BJ (cell line): ENCODE measurements at regions of chr2 and their contacts with region 1.

Region 1: GRCh38 chr2:189698020-189698887 is 23.8 kb downstream of the ANKAR start:
- DNase-seq: peak; percentile 16
- H3K4me3 ChIP-seq: no peak overlapping the region
- H3K27me3 ChIP-seq: no peaks in the 10 kb centered on the region
- CTCF ChIP-seq: peak; percentile 52

Region 2: DNA sequence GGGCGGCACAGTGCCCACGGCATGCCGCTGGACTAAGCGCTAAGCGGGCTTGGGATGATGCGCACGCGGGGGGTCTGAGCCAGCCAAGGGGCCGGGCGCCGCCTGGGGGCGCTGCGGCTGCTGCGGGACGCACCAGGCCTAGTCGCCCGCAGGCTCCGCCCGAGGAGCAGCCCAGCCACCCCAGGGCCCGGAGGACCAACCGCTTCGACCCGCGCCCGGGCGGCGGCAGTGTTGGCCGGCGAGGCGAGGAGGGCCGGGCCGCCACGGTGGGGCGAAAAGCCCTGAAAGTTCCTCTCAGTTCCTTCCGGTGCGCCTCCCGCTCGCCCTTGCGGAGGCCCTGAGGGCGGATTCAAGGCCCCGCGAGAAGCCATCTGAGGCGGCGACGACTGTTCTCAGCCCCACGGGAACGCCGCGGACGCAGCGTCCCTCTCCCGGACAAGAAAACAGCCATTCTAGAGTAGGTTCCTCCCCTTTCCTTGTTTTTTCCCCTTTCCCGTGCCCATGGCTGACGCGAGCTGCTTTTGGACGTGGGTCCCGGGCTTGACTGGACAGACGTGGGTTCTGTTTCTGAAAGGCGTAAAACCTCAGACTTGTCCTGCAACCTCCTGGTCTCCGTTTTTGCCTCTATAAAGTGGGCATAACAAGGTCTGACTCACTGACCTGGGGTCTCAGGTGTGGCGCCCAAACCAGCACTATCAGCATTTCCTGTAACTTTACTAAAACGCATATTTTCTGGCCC is 23.7 kb before region 1 on chr2 and contains the start of gene ANKAR:
- CTCF ChIA-PET with region 1: interaction called, 31 read pairs
- POLR2A ChIA-PET with region 1: interaction called, 9 read pairs
- DNase-seq: peak; percentile 61
- H3K4me3 ChIP-seq: peak within 1 kb of the TSS; percentile 52
- H3K27me3 ChIP-seq: no peaks in the 10 kb centered on the region
- CTCF ChIP-seq: peak; percentile 70
- polyA plus RNA-seq, gene ANKAR: 1.9 and 2.4 TPM in 2 replicates

Region 3: GRCh38 chr2:189685540-189686229 is 12.6 kb before region 1 on chr2:
- CTCF ChIA-PET with region 1: interaction called, 14 read pairs
- POLR2A ChIA-PET with region 1: no interaction called
- DNase-seq: peak; percentile 9
- H3K4me3 ChIP-seq: no peak overlapping the region
- H3K27me3 ChIP-seq: no peaks in the 10 kb centered on the region
- CTCF ChIP-seq: no peak

Region 4: GRCh38 chr2:189982777-189983394 is 284.6 kb after region 1 on chr2:
- CTCF ChIA-PET with region 1: no interaction called
- POLR2A ChIA-PET with region 1: no interaction called
- DNase-seq: no peak
- H3K4me3 ChIP-seq: no peak overlapping the region
- H3K27me3 ChIP-seq: no peaks in the 10 kb centered on the region
- CTCF ChIP-seq: peak; percentile 29